Astrocyte of the cerebellum (primary cell): ENCODE measurements at regions of chr5 and their contacts with region 1.

Region 1: DNA sequence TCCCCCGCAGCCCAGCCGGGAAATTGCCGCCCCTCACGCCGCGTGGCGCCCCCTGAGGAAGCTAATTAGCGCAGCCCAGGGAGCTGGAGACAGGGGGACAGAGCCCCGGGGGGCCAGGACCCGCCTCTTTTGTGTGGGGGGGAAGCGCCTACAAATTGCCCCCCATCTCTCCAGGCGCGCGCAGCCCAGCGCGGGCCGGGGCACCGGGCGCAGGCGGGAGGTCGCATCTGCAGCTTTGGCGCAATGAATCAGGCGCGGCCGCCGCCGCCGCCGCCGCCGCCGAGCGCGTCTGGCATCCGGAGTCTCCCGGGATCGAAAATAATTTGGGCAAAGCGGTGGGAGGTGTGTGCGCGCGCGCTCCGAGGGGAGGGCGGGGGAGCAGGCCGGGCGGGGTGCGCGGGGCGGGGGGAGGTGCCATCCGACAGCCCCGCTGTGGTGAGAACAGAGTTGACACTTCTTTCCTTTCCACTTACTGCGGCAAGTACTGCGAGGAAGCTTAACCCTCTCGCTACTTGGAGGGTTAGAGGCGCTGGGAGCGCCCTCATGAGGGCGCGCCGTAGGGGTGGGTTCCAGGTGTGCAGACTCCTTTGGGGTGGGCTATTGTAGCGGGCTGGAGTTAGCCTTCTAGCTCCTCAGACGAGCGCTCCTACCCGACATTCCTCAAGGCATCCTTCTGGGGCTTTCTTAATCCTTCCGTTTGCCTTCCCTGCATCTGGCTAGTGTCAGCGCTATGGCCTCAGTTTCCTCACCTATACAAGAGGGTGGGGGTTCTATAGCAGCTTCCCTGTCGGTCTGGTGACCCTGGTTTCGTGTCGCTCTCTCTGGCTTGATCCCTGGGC is 63.1 kb downstream of the CXXC5 start:
- DNase-seq: no peak
- H3K4me3 ChIP-seq: peak overlapping the region; percentile 36
- CTCF ChIP-seq: no peak

Region 2: GRCh38 chr5:139752506-139753473 is 41.5 kb after region 1 on chr5:
- in situ Hi-C with region 1: loop called (anchors 5 kb)
- DNase-seq: no peak
- H3K4me3 ChIP-seq: no peak overlapping the region
- CTCF ChIP-seq: no peak